ENCODE measurements at regions of chr1 and their contacts with region 1.

Region 1: GRCh38 chr1:2545759-2546514 is 10.2 kb upstream of the TNFRSF14 start:
- DNase-seq: peak; percentile 98
- H3K4me3 ChIP-seq: peak overlapping the region; percentile 59
- H3K27ac ChIP-seq: peak overlapping the region in 1 of 2 experiments; percentile 97; a peak in 2 of 4 replicates
- H3K4me1 ChIP-seq: peaks cover 0 to 56% of the 10 kb centered on the region in 2 experiments; a peak in 1 of 4 replicates
- H3K27me3 ChIP-seq: no peaks in the 10 kb centered on the region
- CTCF ChIP-seq: no peak
- EP300 ChIP-seq: no peak
- RAD21 ChIP-seq: no peak

Region 2: DNA sequence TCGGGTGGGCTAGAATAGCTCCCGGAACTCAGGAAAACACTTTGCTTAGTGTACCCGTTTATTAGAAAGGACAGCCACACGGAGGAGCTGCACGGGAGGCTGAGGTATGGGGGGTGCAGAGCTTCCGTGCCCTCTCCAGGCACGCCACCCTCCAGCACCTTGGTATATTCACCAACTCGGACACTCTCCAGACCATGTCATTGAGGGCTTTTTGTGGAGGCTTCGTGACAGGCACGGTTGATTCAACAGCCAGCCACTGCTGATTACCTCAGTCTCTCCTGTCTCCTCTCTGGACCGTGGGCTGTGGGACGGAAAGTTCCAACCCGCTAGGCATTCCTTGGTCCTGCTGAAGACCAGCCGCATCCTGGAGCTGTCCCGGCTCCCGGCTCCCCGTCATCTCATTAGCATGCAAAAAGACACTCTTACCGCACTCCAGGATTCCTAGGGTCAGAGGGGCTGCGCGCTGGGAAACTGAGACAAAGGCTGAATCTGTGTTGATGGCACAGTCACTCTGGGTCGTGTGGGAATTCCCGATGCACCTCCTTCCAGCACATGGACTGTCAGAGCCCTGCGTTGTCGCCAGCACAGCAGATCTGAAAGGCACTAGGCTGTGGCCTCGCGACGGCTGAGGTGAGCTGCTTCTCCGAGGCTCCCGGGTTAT is 430.1 kb before region 1 on chr1:
- CTCF ChIA-PET with region 1: no interaction called
- POLR2A ChIA-PET with region 1: no interaction called
- DNase-seq: no peak
- H3K4me3 ChIP-seq: no peak overlapping the region
- H3K27ac ChIP-seq: no peak overlapping the region
- H3K4me1 ChIP-seq: no peaks in the 10 kb centered on the region
- H3K27me3 ChIP-seq: no peaks in the 10 kb centered on the region
- CTCF ChIP-seq: no peak
- EP300 ChIP-seq: no peak
- RAD21 ChIP-seq: no peak

Region 3: DNA sequence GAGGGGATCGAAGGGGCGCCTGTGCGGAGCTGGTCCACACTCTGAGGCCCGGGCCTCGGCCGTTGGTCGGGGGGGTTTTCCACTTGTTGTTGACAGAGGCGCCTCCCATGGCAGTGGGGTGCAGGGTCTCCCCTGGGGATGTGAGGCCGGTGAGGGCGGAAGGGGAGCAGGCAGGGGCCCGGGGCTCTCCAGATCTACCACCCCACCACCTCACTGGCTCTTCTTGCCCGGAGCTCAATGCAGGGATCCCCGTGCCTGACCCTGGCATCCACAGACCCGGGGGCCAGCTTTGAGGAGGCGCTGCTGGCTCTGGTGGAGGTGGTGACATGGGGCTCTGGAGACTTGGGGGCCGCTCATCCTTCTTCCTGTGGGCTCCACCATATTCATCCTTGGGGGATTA is 126.5 kb before region 1 on chr1:
- CTCF ChIA-PET with region 1: interaction called, 44 read pairs
- POLR2A ChIA-PET with region 1: no interaction called
- DNase-seq: no peak
- H3K4me3 ChIP-seq: no peak overlapping the region
- H3K27ac ChIP-seq: no peak overlapping the region
- H3K4me1 ChIP-seq: peaks cover 0 to 15% of the 10 kb centered on the region in 2 experiments; a peak in 1 of 4 replicates
- H3K27me3 ChIP-seq: peaks cover 35% of the 10 kb centered on the region
- CTCF ChIP-seq: no peak
- EP300 ChIP-seq: no peak
- RAD21 ChIP-seq: no peak

Region 4: DNA sequence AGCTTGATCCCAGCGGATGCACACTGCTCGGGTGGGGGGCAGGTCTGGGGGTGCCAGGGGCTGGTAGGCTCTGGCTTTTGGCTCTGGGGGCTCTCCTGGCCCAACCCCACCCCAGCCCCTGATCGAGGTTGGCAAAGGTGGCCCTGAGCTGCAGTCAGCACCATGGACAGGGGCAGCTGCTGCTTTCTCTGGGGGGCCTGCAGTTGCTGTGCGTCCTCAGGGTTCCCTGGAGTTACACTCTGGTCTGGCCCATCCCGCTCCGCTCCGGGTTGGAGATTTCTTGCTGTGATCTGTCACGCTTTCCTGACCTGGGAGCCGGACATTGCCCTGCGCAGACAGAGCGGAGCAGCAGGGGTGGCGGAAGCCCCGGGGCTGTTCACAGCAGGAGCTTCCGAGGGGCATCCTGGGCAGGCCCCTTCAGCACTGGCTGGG is 77.9 kb before region 1 on chr1:
- CTCF ChIA-PET with region 1: interaction called, 17 read pairs
- POLR2A ChIA-PET with region 1: interaction called, 5 read pairs
- DNase-seq: peak; percentile 65
- H3K4me3 ChIP-seq: peak overlapping the region in 1 of 2 experiments; percentile 43; a peak in 1 of 4 replicates
- H3K27ac ChIP-seq: no peak overlapping the region; a peak in 1 of 4 replicates
- H3K4me1 ChIP-seq: peaks cover 0 to 76% of the 10 kb centered on the region in 2 experiments; a peak in 1 of 4 replicates
- H3K27me3 ChIP-seq: no peaks in the 10 kb centered on the region
- CTCF ChIP-seq: no peak
- EP300 ChIP-seq: no peak
- RAD21 ChIP-seq: no peak

Region 5: DNA sequence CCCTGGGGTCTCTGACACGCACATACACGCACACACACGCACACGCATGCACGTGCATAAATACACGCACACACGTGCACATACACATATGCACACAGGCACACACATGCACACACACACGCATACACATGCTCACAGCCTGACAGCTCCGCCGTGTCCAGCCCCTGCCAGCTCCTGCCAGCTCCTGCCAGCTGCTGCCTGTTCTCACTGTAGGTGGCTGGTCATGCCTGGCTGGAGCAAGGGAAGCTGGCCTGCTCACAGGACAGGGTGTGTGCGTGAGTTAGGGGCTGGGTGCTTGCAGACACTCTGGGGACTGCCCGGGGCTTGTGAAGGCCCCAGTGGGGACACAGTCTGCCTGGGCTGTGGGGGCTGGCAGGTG is 65.0 kb before region 1 on chr1:
- CTCF ChIA-PET with region 1: interaction called, 26 read pairs
- POLR2A ChIA-PET with region 1: interaction called, 24 read pairs
- DNase-seq: peak; percentile 88
- H3K4me3 ChIP-seq: no peak overlapping the region
- H3K27ac ChIP-seq: peak overlapping the region in 1 of 2 experiments; percentile 96; a peak in 2 of 4 replicates
- H3K4me1 ChIP-seq: peaks cover 0 to 76% of the 10 kb centered on the region in 2 experiments; a peak in 1 of 4 replicates
- H3K27me3 ChIP-seq: no peaks in the 10 kb centered on the region
- CTCF ChIP-seq: no peak
- EP300 ChIP-seq: 0 out of 4 replicates have a peak, but pooled peaks of 1 of the 2 experiments have one; percentile 15
- RAD21 ChIP-seq: no peak

Region 6: GRCh38 chr1:2525920-2526823 is 19.8 kb before region 1 on chr1 and contains the start of gene PANK4:
- CTCF ChIA-PET with region 1: interaction called, 35 read pairs
- POLR2A ChIA-PET with region 1: interaction called, 19 read pairs
- DNase-seq: peak; percentile 96
- H3K4me3 ChIP-seq: peak within 1 kb of the TSS; percentile 70 to 93
- H3K27ac ChIP-seq: peak within 1 kb of the TSS; percentile 24 to 87; a peak in 3 of 4 replicates
- H3K4me1 ChIP-seq: peaks cover 0 to 45% of the 10 kb centered on the region in 2 experiments; a peak in 3 of 4 replicates
- H3K27me3 ChIP-seq: peaks cover 6% of the 10 kb centered on the region; the same call in 1 of the 2 replicates
- CTCF ChIP-seq: no peak
- EP300 ChIP-seq: no peak
- RAD21 ChIP-seq: no peak
- polyA plus RNA-seq, gene PANK4: 15.1 and 16.6 TPM in 2 replicates

Region 7: DNA sequence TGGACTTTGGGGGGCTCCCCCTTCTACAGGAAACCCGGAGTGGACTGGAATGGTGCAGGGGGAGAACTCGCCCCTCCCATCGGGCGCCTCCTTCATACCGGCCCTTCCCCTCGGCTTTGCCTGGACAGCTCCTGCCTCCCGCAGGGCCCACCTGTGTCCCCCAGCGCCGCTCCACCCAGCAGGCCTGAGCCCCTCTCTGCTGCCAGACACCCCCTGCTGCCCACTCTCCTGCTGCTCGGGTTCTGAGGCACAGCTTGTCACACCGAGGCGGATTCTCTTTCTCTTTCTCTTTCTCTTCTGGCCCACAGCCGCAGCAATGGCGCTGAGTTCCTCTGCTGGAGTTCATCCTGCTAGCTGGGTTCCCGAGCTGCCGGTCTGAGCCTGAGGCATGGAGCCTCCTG is 10.3 kb after region 1 on chr1 and contains the start of gene TNFRSF14:
- CTCF ChIA-PET with region 1: interaction called, 13 read pairs
- POLR2A ChIA-PET with region 1: no interaction called
- DNase-seq: no peak
- H3K4me3 ChIP-seq: no peak within 1 kb of the TSS
- H3K27ac ChIP-seq: no peak within 1 kb of the TSS
- H3K4me1 ChIP-seq: peaks cover 0 to 4% of the 10 kb centered on the region in 2 experiments; a peak in 1 of 4 replicates
- H3K27me3 ChIP-seq: no peaks in the 10 kb centered on the region
- CTCF ChIP-seq: no peak
- EP300 ChIP-seq: no peak
- RAD21 ChIP-seq: no peak
- polyA plus RNA-seq, gene TNFRSF14: 0.19 and 0.28 TPM in 2 replicates

Region 8: GRCh38 chr1:2623571-2624337 is 77.8 kb after region 1 on chr1:
- CTCF ChIA-PET with region 1: no interaction called
- POLR2A ChIA-PET with region 1: no interaction called
- DNase-seq: no peak
- H3K4me3 ChIP-seq: no peak overlapping the region
- H3K27ac ChIP-seq: no peak overlapping the region
- H3K4me1 ChIP-seq: no peaks in the 10 kb centered on the region
- H3K27me3 ChIP-seq: peaks cover 8% of the 10 kb centered on the region; the same call in 1 of the 2 replicates
- CTCF ChIP-seq: no peak
- EP300 ChIP-seq: no peak
- RAD21 ChIP-seq: no peak

Measured in SK-N-SH (cell line).